GM12878 (cell line): ENCODE measurements at regions of chr7 and their contacts with region 1.

Region 1: DNA sequence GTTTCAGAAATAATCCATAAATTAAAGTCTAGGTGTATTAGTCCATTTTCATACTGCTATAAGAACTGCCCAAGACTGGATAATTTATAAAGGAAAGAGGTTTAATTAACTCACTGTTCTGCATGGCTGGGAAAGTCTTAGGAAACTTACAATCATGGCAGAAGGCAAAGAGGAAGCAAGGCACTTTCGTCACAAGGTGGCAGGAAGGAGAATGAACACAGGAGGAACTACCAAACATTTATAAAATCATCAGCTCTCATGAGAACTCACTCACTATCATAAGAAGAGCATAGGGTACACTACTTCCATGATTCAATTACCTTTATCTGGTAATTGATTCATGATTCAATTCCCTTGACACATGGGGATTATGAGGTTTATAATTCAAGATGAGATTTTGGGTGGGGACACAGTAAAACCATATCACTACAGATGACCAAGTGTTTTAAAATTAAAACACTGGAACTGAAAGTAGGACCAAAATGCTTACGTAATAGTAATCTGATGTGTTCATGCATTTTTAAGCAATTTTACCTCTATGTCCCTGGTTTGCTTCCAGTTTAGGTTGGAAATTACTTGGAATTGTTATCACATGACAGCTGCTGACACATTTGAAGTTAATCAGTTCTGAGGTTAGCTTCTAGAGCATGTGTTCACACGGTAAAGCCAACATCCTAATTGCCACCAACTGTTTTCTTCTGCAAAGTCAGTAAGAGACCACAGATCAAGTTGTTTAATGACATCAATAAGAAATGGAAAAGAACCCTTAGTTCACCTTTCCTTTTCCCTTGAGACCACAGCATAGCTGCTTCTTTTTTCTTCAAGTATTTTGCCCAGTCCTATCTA is 48.4 kb upstream of the SEMA3C start:
- DNase-seq: no peak
- ATAC-seq: no peak
- H3K4me3 ChIP-seq: no peak overlapping the region
- H3K27ac ChIP-seq: no peak overlapping the region
- H3K4me1 ChIP-seq: no peaks in the 10 kb centered on the region
- H3K27me3 ChIP-seq: no peaks in the 10 kb centered on the region
- CTCF ChIP-seq: no peak
- EP300 ChIP-seq: no peak
- POLR2A ChIP-seq: no peak
- RAD21 ChIP-seq: no peak

Region 2: DNA sequence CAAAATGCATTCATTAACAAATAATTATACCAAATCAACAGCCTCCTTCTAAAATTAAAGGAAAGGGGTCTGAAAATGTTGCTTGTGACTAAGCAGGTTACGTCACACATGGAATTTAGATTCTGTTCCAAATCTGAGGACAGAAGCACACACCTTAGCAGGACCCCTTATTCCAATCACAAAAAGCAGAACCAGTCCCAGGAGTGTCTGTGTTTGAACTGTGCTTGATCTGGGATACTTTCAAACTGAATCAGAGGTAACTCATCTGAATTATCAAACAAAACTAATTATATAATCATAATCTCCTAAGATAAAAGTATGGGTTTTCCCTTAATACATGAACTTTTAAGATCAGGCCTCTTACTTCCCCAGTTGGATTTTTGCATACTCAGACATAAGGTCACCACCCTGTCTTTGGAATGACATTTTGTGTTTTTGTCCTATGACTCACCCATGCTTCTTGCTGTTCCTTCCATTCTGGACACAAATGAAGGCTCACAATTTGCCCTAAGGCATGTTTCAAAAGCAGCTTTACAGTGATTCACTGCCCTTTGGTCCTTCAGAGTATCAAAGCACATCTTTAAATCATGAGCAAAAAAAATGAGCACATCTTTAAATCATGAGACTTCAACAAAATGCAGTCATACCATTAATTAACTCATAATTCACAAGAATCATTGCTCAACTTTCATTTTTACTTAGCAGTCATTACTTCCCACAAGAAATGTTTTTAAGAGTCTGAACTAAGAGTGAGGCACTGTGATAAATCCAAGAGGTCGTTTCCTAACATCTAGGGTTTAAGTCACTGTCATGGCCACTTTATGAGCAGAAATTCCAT is 83.9 kb before region 1 on chr7:
- CTCF ChIA-PET with region 1: no interaction called
- POLR2A ChIA-PET with region 1: no interaction called
- RAD21 ChIA-PET with region 1: no interaction called
- SMC1A ChIA-PET with region 1: no interaction called
- in situ Hi-C with region 1: no loop called
- intact Hi-C with region 1: no loop called
- DNase-seq: no peak
- ATAC-seq: no peak
- H3K4me3 ChIP-seq: no peak overlapping the region
- H3K27ac ChIP-seq: no peak overlapping the region
- H3K4me1 ChIP-seq: no peaks in the 10 kb centered on the region
- H3K27me3 ChIP-seq: no peaks in the 10 kb centered on the region
- CTCF ChIP-seq: no peak
- EP300 ChIP-seq: no peak
- POLR2A ChIP-seq: no peak
- RAD21 ChIP-seq: no peak

Region 3: GRCh38 chr7:80900583-80901576 is 66.4 kb before region 1 on chr7:
- CTCF ChIA-PET with region 1: no interaction called
- POLR2A ChIA-PET with region 1: no interaction called
- RAD21 ChIA-PET with region 1: no interaction called
- SMC1A ChIA-PET with region 1: no interaction called
- in situ Hi-C with region 1: no loop called
- intact Hi-C with region 1: loop called (anchors 10 kb)
- DNase-seq: no peak
- ATAC-seq: no peak
- H3K4me3 ChIP-seq: no peak overlapping the region
- H3K27ac ChIP-seq: no peak overlapping the region
- H3K4me1 ChIP-seq: no peaks in the 10 kb centered on the region
- H3K27me3 ChIP-seq: no peaks in the 10 kb centered on the region
- CTCF ChIP-seq: no peak
- EP300 ChIP-seq: no peak
- POLR2A ChIP-seq: no peak
- RAD21 ChIP-seq: no peak